CD4-positive, alpha-beta memory T cell (primary cell): ENCODE measurements at regions of chr17 and their contacts with region 1.

Region 1: DNA sequence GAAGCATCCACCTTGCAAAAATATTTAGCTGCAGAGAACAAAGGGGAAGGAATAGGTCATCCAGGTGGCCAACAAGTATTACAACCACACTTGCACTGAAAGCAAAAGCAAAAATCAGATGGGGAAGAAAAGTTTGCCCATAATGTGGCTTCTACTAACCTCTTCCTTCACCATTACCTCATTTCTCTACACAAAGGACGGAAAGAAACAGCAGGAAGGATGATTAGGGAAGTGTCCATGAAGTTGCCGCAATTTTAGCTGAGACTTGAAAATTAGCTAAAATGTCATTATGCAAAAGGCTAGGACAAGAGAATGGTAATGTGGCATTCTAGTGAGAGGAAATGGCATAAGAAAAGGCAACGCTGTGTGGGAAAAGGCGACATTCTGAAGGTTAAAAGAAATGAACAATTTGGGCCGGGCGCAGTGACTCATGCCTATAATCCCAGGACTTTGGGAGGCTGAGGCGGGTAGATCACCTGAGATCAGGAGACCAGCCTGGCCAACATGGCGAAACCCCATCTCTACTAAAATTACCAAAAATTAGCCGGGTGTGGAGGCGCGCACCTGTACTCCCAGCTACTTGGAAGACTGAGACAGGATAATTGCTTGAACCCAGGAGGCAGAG is 13.7 kb downstream of the KANSL1 start:
- DNase-seq: no peak
- H3K4me3 ChIP-seq: no peak overlapping the region
- H3K4me3 Mint-ChIP-seq: peak overlapping the region; percentile 29 to 85 (median 72)
- H3K27ac ChIP-seq: no peak overlapping the region
- H3K27ac Mint-ChIP-seq: peak overlapping the region; percentile 11 to 86 (median 70)
- H3K4me1 ChIP-seq: peaks cover 92% of the 10 kb centered on the region
- H3K4me1 Mint-ChIP-seq: peaks cover 67 to 96% (median 85%) of the 10 kb centered on the region in 4 donors
- H3K27me3 ChIP-seq: no peaks in the 10 kb centered on the region
- H3K27me3 Mint-ChIP-seq: no peaks in the 10 kb centered on the region

Region 2: DNA sequence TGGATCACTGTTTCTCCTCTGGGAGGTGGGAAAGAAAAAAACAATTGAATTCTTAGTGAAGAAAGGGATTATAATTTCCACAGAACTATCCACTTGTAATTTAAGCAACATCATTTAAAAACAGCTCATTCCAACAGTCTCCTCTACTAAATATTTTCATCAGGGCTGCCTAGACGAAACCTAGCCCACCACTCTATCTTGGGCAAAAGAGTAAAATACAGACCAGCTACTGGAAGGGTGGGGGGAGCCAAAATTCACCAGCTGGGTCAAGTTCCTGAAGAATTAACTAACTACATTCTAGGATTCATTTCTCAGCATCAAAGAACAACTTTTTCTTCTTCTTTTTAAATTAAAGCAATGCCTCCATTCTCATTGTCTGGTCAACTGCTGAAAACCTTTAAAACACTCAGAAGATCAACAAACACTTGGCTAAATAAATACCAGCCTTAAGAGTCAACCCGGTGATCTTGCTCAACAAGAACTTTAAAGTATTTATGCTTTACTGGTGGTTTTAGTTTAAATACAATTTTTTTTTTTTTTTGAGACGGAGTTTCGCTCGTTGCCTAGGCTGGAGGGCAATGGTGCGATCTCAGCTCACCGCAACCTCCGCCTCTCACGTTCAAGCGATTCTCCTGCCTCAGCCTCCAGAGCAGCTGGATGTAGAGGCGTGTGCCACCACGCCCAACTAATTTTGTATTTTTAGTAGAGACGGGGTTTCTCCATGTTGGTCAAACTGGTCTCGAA is 11.5 kb before region 1 on chr17:
- CTCF ChIA-PET with region 1: interaction called, 4 read pairs
- POLR2A ChIA-PET with region 1: interaction called, 15 read pairs
- intact Hi-C with region 1: no loop called
- DNase-seq: no peak
- H3K4me3 ChIP-seq: no peak overlapping the region
- H3K4me3 Mint-ChIP-seq: peak overlapping the region in 5 of 8 donors; percentile 1 to 61 (median 26)
- H3K27ac ChIP-seq: no peak overlapping the region
- H3K27ac Mint-ChIP-seq: peak overlapping the region in 2 of 7 donors; percentile 2 to 10
- H3K4me1 ChIP-seq: peaks cover 95% of the 10 kb centered on the region
- H3K4me1 Mint-ChIP-seq: peaks cover 65 to 94% (median 80%) of the 10 kb centered on the region in 4 donors
- H3K27me3 ChIP-seq: no peaks in the 10 kb centered on the region
- H3K27me3 Mint-ChIP-seq: no peaks in the 10 kb centered on the region